ENCODE measurements at regions of chr13 and their contacts with region 1.

Region 1: GRCh38 chr13:89520468-89520867 is 1827.0 kb upstream of the MIR17HG start:
- DNase-seq: no peak
- H3K4me3 ChIP-seq: no peak overlapping the region
- H3K27ac ChIP-seq: no peak overlapping the region
- H3K4me1 ChIP-seq: no peaks in the 10 kb centered on the region
- CTCF ChIP-seq: no peak

Region 2: DNA sequence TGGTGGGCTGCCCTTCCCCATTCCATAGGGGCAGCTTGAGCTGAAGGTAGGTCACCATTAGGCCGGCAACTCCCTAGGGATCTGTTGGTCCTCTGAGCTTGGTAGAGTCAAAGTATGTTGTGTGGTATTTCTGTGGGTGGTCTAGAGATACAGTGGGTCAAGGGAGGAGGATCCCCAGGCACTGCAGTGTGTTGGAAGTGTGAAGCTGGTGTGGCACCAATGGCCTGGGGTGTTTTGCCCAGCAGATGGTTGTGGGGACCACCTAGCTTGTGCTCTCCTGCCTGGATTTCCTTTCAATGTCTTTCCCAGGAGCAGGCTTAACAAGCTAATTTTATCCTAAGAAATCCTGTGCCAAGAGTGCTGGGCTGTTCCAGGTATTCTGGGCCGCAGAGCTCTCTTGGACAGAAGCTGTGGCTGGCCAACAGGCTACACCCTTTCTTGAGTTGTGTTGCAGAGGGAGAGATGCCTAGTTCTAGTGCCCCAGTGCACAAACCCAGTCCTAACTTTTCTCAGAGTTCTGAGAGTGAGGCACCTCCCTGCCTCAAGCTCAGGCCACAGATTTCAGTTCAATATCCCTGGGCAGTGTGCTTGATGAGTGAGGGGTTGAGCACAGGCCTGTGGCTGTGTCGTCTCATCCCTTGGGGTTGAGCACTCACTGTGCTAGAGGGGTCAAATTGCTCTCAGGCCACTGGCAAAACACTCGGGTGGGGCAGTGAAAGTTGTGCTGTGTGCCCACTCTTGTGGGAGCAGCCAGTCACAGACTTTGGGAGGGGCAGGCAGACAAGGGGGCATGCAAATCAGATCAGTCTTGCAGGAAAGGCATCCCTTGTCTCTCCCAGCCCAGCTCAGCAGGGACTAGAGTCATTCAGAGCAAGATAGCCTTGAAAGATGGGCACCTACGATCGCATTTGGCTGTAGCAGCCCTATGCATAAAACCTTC is 20.9 kb after region 1 on chr13:
- CTCF ChIA-PET with region 1: no interaction called
- POLR2A ChIA-PET with region 1: interaction called, 12 read pairs
- intact Hi-C with region 1: no loop called
- DNase-seq: no peak
- H3K4me3 ChIP-seq: no peak overlapping the region
- H3K27ac ChIP-seq: no peak overlapping the region
- H3K4me1 ChIP-seq: no peaks in the 10 kb centered on the region
- CTCF ChIP-seq: no peak

Measured in OCI-LY7 (cell line).